ENCODE measurements at regions of chr22 and their contacts with region 1.

Region 1: DNA sequence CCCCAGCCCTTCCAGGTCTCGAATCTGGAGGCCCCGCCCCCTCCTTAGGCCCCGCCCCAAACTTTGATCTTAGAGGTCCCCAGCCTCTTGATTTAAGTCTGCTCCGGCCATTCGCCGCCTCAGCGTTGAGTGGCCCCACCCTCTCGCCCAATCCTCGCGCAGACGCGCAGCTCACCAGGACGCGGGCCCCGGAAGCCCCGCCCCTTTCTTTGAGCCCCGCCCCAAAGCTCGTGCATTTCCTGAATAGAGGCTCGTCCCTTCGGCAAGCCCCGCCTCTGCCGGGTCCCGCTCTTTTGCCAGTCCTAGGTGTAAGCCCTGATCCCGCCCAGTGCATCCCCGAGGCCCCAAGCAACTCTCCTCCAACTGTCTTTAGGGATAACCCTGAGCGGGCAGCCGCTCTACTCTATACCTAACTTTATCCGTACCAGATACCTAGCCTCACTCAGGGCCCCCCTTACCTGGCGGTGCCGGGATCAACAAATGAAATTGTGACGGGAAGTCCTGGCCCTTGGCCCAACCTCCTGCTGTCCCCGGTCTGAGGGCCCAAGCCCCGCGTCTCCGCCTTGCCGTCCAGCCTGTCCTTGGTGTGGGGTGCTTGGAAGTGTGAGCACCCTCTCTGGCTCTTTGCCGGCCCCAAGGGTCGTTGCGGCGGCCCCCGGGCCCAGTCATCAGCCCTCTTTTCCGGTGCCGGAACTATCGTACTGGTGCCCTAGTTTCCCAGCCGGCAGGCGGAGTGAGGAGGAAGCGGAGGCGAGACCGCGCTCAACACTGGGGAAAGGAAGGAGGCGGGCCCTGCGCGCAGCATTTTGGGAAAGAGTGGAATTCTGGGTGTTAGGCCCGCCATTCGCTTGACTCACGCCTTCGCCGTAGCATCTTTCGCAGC is at the start of gene SNRPD3:
- DNase-seq: peak; percentile 100
- ATAC-seq: peak; percentile 91
- H3K4me3 Mint-ChIP-seq: peak within 1 kb of the TSS; percentile 95
- H3K27ac Mint-ChIP-seq: peak within 1 kb of the TSS; percentile 99
- H3K4me1 Mint-ChIP-seq: peaks cover 53% of the 10 kb centered on the region
- H3K27me3 Mint-ChIP-seq: no peaks in the 10 kb centered on the region
- total RNA-seq, gene SNRPD3: 156 to 232 TPM

Region 2: GRCh38 chr22:23772649-23773495 is 782.5 kb before region 1 on chr22 and contains the start of gene MMP11:
- CTCF ChIA-PET with region 1: no interaction called
- POLR2A ChIA-PET with region 1: no interaction called
- intact Hi-C with region 1: no loop called
- DNase-seq: peak; percentile 74
- ATAC-seq: peak; percentile 54
- H3K4me3 Mint-ChIP-seq: peak within 1 kb of the TSS; percentile 53
- H3K27ac Mint-ChIP-seq: no peak within 1 kb of the TSS
- H3K4me1 Mint-ChIP-seq: peaks cover 10% of the 10 kb centered on the region
- H3K27me3 Mint-ChIP-seq: peaks cover 3% of the 10 kb centered on the region
- total RNA-seq, gene MMP11: 0.32 to 1.1 TPM

Region 3: GRCh38 chr22:23857606-23858483 is 697.6 kb before region 1 on chr22 and contains the start of gene SLC2A11:
- CTCF ChIA-PET with region 1: no interaction called
- POLR2A ChIA-PET with region 1: no interaction called
- intact Hi-C with region 1: loop called in 1 of 2 experiments (anchors 5 kb)
- DNase-seq: peak; percentile 97
- ATAC-seq: peak; percentile 97
- H3K4me3 Mint-ChIP-seq: peak within 1 kb of the TSS; percentile 80
- H3K27ac Mint-ChIP-seq: peak within 1 kb of the TSS; percentile 72
- H3K4me1 Mint-ChIP-seq: peaks cover 15% of the 10 kb centered on the region
- H3K27me3 Mint-ChIP-seq: no peaks in the 10 kb centered on the region
- total RNA-seq, gene SLC2A11: 7.6 to 7.7 TPM

Region 4: GRCh38 chr22:24011735-24012068 is 543.7 kb before region 1 on chr22:
- CTCF ChIA-PET with region 1: no interaction called
- POLR2A ChIA-PET with region 1: no interaction called
- intact Hi-C with region 1: loop called in 1 of 2 experiments (anchors 1 kb)
- DNase-seq: no peak
- ATAC-seq: no peak
- H3K4me3 Mint-ChIP-seq: peak overlapping the region; percentile 92
- H3K27ac Mint-ChIP-seq: peak overlapping the region; percentile 94
- H3K4me1 Mint-ChIP-seq: peaks cover 27% of the 10 kb centered on the region
- H3K27me3 Mint-ChIP-seq: no peaks in the 10 kb centered on the region

Region 5: GRCh38 chr22:24270638-24271408 is 284.6 kb before region 1 on chr22 and contains the start of gene SPECC1L:
- CTCF ChIA-PET with region 1: no interaction called
- POLR2A ChIA-PET with region 1: no interaction called
- intact Hi-C with region 1: loop called in 1 of 2 experiments (anchors 1 kb)
- DNase-seq: peak; percentile 95
- ATAC-seq: peak; percentile 90
- H3K4me3 Mint-ChIP-seq: peak within 1 kb of the TSS; percentile 78
- H3K27ac Mint-ChIP-seq: peak within 1 kb of the TSS; percentile 82
- H3K4me1 Mint-ChIP-seq: peaks cover 38% of the 10 kb centered on the region
- H3K27me3 Mint-ChIP-seq: no peaks in the 10 kb centered on the region
- total RNA-seq, gene SPECC1L: 31.5 to 38.2 TPM

Region 6: DNA sequence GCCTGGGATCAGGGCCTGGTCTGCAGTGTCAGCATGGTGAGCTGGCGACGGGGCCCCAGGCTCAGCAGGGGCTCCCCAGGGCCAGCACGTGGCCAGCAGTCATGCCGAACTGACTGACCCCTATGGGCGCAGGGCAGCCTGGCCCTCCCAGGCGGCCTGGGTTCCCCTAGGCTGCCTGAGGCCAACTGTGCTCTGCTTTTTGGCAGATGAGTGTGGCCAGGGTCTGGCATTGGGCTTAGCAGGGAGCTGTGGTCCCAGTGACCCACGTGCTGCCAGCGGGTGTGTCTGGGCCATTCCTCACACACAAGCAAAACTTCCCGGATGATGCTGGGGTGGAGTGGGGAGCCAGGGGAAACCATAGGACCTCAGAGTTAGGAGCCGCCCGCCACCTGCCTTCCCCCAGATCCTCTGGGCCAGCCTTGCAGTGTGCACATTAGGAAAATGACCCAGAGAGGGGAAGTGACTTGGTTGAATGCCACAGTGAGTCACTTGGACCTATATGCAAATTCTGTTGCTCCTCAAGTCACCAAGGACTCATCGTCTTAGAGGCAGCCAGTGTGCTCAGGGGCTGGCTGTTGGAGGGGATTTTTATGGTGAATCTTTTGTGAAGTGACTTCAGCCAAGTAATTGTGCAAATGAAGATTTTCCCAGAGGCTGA is 121.5 kb before region 1 on chr22:
- CTCF ChIA-PET with region 1: no interaction called
- POLR2A ChIA-PET with region 1: interaction called, 4 read pairs
- intact Hi-C with region 1: loop called in 1 of 2 experiments (anchors 1 kb)
- DNase-seq: no peak
- ATAC-seq: peak; percentile 81
- H3K4me3 Mint-ChIP-seq: peak overlapping the region; percentile 70
- H3K27ac Mint-ChIP-seq: peak overlapping the region; percentile 99
- H3K4me1 Mint-ChIP-seq: peaks cover 92% of the 10 kb centered on the region
- H3K27me3 Mint-ChIP-seq: no peaks in the 10 kb centered on the region

Region 7: DNA sequence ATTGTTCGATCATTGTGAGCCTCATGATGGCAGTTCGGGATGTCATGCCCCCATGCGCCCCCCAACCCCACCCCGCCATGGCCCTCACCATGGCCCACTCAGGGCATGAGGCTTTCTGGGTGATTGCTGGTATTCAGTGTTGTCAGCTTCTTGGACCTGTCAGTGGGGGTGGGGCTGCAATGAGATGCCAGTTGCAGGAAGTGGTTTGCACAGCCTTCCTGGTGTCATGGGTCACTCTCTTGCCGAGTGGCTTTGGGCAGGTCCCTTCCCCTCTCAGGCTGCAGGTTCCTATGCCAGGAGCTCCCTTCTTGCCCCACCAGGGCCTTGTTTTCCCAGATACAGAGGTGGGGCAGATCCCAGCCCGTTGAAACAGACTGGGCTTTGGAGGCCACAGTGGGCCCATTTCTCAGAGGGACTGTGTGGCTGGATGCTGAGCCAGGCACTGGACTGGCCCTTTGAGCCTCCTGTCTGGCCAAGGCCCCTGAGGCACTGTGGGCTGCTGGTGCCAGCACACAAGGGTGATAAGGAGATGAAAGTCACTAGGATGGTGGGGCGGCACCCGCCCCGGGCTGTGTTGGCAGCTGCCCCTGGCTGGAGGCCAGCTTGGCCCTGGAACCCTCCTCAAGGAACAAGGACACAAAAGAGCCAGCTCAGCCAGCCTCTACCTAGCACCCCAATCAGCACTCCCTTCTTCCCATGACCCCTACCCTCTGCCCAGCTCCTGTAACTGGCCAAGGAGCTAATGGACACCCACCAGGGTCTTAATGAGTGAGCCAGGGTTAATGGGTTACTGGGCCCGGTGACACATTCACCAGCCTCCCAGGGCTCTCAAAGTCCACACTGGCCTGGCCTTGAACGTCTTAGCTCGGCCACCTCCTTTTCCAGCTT is 46.1 kb after region 1 on chr22:
- CTCF ChIA-PET with region 1: no interaction called
- POLR2A ChIA-PET with region 1: no interaction called
- intact Hi-C with region 1: loop called in 1 of 2 experiments (anchors 5 kb)
- DNase-seq: no peak
- ATAC-seq: no peak
- H3K4me3 Mint-ChIP-seq: no peak overlapping the region
- H3K27ac Mint-ChIP-seq: no peak overlapping the region
- H3K4me1 Mint-ChIP-seq: peaks cover 15% of the 10 kb centered on the region
- H3K27me3 Mint-ChIP-seq: no peaks in the 10 kb centered on the region

Region 8: DNA sequence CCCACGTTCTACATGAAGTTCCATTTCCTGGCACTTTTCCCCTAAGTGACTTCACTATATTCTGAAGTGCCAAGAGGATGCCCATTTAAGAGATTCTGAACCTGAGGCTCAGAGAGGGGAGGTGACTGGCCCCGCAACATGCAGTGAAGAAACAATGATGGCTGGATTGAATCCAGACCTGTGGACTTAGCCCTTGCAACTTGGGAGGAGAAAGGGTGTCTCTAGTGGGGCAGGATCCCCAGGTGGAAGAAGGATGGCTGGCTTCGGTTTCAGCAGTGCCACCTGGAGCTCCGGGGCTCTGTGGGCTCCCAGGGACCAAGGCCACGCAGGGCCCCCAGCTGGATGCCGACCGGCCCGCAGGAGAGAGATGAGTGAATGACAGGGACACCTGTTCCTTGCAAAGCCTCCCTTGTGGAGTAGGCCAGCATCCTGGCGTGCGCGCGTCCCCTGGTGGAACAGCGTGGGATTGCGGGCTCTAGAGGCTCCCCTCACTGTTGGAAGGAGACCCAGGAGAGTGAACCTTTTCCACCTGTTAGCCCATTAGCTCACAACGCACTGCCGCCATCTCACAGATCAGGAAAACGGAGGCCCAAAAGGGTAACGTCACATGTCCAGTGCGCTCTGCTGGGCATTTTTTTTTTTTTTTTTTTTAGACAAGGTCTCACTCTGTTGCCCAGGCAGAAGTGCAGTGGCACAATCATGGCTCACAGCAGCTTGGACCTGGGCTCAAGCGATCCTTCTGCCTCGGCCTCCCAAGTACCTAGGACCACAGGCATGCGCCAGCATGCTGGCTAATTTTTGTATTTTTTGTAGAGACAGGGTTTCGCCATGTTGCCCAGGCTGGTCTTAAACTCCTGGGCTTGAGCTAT is 501.8 kb after region 1 on chr22:
- CTCF ChIA-PET with region 1: no interaction called
- POLR2A ChIA-PET with region 1: no interaction called
- intact Hi-C with region 1: loop called in 1 of 2 experiments (anchors 2 kb)
- DNase-seq: peak; percentile 90
- ATAC-seq: peak; percentile 49
- H3K4me3 Mint-ChIP-seq: no peak overlapping the region
- H3K27ac Mint-ChIP-seq: no peak overlapping the region
- H3K4me1 Mint-ChIP-seq: peaks cover 59% of the 10 kb centered on the region
- H3K27me3 Mint-ChIP-seq: peaks cover 2% of the 10 kb centered on the region

Measured in activated CD4-positive, alpha-beta T cell treated with anti-CD3 and anti-CD28 coated beads for 36 hours (primary cell).